Colonic mucosa (tissue), 4 donors: ENCODE measurements at regions of chr7 and their contacts with region 1.

Region 1: DNA sequence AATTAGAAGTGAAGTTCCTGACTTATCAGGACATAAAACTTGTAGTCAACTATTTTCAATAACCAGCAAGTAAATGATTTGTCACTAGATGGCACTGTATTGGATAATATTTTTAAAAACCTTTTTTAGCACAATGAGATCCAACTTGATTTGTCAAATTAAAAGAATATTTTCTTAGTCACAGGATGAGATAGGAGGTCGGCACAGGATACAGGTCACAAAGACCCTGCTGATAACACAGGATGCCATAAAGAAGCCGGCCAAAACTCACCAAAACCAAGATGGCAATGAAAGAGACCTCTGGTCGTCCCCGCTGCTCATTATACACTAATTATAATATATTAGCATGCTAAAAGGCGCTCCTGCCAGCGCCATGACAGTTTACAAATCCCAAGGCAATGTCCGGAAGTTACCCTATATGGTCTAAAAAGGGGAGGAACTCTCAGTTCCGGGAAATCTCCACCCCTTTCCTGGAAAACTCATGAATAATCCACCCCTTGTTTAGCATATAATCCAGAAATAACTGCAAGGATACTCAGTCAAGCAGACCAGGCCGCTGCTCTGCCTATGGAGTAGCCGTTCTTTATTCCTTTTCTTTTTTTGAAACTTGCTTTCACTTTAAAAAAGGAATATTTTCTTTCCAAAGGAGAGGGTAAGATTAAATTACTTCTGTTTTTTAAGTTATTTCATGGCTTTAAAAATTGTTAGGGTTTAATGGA is 255.7 kb upstream of the MKLN1 start:
- DNase-seq: no peak
- H3K4me3 ChIP-seq: no peak overlapping the region
- H3K27ac ChIP-seq: peak overlapping the region; percentile 22
- H3K4me1 ChIP-seq: no peaks in the 10 kb centered on the region
- H3K27me3 ChIP-seq: no peaks in the 10 kb centered on the region
- CTCF ChIP-seq: no peak

Region 2: DNA sequence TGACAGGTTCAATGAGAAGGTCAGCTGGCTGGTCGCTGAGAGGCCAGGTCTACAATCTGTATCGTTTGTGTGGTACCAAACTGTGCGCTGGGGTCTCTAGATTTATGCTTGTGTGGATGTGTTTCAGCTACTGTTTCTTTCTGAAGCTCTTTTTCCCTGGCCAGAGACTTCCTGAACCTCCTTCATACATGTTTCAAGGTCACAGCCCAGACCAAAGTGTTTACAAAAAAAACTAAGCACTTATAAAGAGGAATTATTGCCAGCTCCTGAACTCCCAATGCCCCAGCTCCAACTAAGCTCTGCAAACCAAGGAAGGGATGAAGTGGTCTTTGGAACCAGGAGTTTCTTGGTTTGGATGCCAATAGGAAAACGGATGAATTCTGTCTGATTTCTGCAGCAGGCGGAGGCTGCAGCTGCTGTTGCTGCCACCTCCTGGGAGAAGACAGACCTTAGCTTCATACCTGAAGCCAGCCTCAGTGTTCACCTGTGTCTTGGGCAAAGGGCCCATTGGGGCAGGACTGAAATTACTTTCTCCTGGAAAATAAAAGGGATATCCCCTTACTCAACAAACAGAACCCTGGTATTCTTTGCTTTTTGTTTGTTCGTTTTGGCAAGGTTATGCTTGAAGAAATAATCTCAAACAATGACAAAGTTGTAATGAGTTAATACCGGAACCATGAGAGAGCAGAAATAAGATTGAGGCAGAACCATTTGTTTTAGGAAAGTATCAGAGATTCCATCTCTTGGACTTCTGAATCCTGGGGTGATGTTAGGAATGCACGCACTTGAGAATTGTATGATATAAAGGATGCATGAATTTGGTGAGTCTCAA is 231.1 kb after region 1 on chr7:
- intact Hi-C with region 1: loop called (anchors 5 kb)
- DNase-seq: peak; percentile 27
- H3K4me3 ChIP-seq: no peak overlapping the region
- H3K27ac ChIP-seq: no peak overlapping the region
- H3K4me1 ChIP-seq: no peaks in the 10 kb centered on the region
- H3K27me3 ChIP-seq: no peaks in the 10 kb centered on the region
- CTCF ChIP-seq: peak; percentile 48

Region 3: DNA sequence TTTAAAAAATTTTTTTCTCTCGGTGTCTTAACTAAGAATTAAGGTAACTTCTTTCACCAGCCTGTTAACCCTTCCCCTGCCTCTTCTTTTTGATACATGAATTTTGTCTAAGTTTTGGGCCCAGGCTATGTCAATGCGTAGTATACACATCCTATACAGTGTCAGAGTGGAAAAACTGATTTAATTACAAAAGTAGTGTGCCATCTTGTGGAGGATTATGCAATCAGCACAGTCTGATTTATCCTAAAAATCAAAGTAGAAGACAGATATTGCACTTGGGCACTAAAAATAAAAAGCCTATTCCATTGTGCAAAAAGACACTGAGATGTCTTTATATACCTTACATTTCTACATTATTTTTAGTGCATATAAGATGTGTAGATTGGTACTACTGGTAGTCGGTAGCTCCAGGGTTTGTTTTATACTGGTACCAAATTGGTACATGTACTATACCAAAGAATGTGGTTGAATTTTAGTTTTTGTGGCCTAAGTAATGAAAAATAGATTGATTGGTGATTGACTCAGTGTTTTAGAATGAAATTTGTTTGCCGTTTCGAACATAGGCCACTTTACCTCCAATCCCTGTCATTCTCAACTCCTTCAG is 352.4 kb after region 1 on chr7:
- intact Hi-C with region 1: loop called (anchors 10 kb)
- DNase-seq: no peak
- H3K4me3 ChIP-seq: no peak overlapping the region
- H3K27ac ChIP-seq: no peak overlapping the region
- H3K4me1 ChIP-seq: no peaks in the 10 kb centered on the region
- H3K27me3 ChIP-seq: no peaks in the 10 kb centered on the region
- CTCF ChIP-seq: peak; percentile 57

Region 4: GRCh38 chr7:131654668-131655326 is 582.9 kb after region 1 on chr7:
- intact Hi-C with region 1: loop called (anchors 10 kb)
- DNase-seq: peak; percentile 84
- H3K4me3 ChIP-seq: no peak overlapping the region
- H3K27ac ChIP-seq: no peak overlapping the region
- H3K4me1 ChIP-seq: no peaks in the 10 kb centered on the region
- H3K27me3 ChIP-seq: no peaks in the 10 kb centered on the region
- CTCF ChIP-seq: peak; percentile 79